SK-N-SH (cell line): ENCODE measurements at regions of chr9 and their contacts with region 1.

Region 1: GRCh38 chr9:14627513-14627912 is 65.7 kb downstream of the ZDHHC21 start:
- DNase-seq: peak; percentile 6
- H3K4me3 ChIP-seq: no peak overlapping the region
- H3K27ac ChIP-seq: no peak overlapping the region
- H3K4me1 ChIP-seq: peaks cover 0 to 7% of the 10 kb centered on the region in 2 experiments; a peak in 2 of 4 replicates
- H3K27me3 ChIP-seq: no peaks in the 10 kb centered on the region
- CTCF ChIP-seq: no peak
- EP300 ChIP-seq: no peak
- RAD21 ChIP-seq: no peak

Region 2: DNA sequence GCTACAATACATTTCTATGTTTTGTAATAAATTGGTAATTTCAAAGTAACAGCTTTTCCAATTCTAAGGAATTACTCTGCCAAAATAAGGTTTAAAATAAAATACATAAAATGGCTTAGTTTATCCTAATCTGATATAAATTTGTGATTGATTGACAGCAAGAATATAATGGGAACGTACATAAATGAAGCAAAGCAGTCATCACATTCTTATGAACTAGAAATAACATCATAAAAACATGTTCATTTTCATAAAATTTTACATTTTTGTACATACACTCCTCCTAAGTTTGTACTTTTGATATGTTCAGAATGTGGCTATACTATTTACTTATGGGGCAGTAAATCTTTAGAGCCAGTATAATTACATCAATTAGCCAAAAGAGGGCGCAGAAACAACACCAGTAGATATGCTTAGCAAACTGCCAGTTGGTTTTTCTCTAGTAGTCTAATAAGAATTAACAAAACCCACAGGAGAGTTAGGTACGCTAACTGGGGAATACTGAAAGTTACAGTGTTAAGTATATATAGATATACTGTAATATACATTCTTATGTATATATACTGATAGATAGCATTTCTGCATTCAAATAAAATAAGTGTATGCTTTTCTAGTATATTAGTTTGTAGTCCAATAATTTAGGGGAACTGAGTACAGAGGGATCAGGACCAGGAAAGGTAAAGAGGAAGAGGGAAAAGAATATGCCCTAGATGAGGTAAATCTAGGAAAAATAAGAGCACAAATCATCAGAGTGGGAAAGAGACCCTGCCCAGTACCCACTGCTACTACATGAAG is 11.1 kb before region 1 on chr9:
- CTCF ChIA-PET with region 1: interaction called, 13 read pairs
- POLR2A ChIA-PET with region 1: no interaction called
- DNase-seq: peak; percentile 12
- H3K4me3 ChIP-seq: no peak overlapping the region
- H3K27ac ChIP-seq: no peak overlapping the region
- H3K4me1 ChIP-seq: no peaks in the 10 kb centered on the region; a peak in 1 of 4 replicates
- H3K27me3 ChIP-seq: no peaks in the 10 kb centered on the region
- CTCF ChIP-seq: peak; percentile 77
- EP300 ChIP-seq: no peak
- RAD21 ChIP-seq: peak; percentile 76

Region 3: GRCh38 chr9:14788846-14789245 is 161.3 kb after region 1 on chr9:
- CTCF ChIA-PET with region 1: no interaction called
- POLR2A ChIA-PET with region 1: no interaction called
- DNase-seq: no peak
- H3K4me3 ChIP-seq: no peak overlapping the region
- H3K27ac ChIP-seq: no peak overlapping the region
- H3K4me1 ChIP-seq: no peaks in the 10 kb centered on the region
- H3K27me3 ChIP-seq: no peaks in the 10 kb centered on the region
- CTCF ChIP-seq: no peak
- EP300 ChIP-seq: no peak
- RAD21 ChIP-seq: no peak